Activated naive CD8-positive, alpha-beta T cell treated with anti-CD3 and anti-CD28 coated beads, Interleukin-2, amount 10 ng/mL, durations not matched to agents 7 days and 5 days (primary cell): ENCODE measurements at regions of chr7 and their contacts with region 1.

Region 1: DNA sequence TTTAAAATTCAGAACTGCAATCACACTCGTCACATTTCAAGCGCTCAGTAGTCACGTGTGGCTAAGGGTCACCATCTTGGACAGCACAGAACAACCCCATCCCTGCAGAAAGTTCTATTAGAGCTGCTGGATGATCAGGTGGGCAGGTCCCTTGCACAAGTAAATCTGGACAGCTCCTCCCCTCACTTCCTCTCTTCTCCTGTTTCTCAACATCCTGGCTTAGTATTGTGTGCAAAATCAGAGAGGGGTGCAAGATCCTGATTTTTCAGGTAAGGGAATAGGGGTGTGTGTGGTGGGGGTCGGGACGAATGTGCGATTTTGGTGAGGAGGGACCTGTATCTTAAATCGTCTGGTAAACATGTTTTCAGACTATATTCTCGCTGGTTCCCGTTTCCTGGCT is at the start of gene GIMAP4:
- DNase-seq: no peak
- ATAC-seq: peak; percentile 63
- H3K4me3 Mint-ChIP-seq: peak within 1 kb of the TSS; percentile 94
- H3K27ac Mint-ChIP-seq: peak within 1 kb of the TSS; percentile 96
- H3K4me1 Mint-ChIP-seq: peaks cover 55% of the 10 kb centered on the region
- H3K27me3 Mint-ChIP-seq: no peaks in the 10 kb centered on the region
- total RNA-seq, gene GIMAP4: 285 to 288 TPM

Region 2: DNA sequence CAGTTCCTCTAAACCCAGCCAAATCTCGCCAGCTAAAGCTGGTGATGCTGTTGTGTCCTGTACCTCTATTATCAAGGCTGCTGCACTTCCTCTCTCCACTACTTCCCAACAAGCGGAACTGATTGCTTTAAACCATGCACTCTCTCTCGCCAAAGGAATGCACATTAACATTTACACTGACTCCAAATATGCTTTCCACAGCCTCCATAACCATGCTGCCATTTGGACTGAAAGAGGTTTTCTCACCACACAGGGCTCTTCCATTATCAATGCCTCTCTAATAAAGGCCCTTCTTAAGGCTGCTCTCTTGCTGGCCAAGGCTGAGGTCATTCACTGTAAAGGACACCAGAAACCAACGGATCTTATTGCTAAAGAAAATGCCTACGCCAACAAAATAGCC is 255.5 kb before region 1 on chr7:
- POLR2A ChIA-PET with region 1: no interaction called
- DNase-seq: no peak
- ATAC-seq: no peak
- H3K4me3 Mint-ChIP-seq: no peak overlapping the region
- H3K27ac Mint-ChIP-seq: no peak overlapping the region
- H3K4me1 Mint-ChIP-seq: no peaks in the 10 kb centered on the region
- H3K27me3 Mint-ChIP-seq: no peaks in the 10 kb centered on the region

Region 3: DNA sequence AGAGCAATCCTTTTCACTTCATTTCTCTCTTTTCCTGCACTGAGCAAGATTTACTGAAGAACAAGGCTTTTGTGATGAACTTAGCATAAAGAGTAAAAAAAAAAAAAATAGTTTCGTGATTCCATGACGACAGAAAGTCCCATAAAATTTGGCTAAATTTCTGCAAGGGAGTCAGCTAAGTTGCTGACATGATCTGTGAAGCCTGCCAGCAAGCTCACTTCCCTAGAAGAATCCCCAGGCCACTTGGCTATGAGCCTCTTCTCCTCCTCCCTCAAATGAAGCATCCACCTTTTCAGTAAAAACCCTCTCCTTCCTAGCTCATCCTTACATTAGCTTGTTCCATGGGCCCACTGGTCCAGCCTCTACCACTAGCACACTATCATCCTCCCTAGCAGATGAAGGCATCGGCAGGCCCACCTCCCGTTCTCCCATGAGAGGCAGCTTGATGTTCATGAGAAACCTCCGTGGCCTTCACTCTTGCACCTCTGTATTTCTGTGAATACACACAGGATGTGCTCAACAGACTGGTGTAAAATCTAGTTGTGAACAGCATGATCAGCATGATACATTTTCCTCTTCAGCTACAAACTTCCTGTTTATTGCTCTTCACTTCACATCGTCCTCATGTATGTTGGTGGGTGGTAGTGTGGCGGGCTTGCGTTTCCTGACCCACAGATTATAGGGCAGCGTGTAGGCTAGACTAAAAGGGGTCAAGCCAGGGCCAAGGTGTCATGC is 85.8 kb before region 1 on chr7:
- POLR2A ChIA-PET with region 1: interaction called, 13 read pairs
- DNase-seq: peak; percentile 65
- ATAC-seq: peak; percentile 86
- H3K4me3 Mint-ChIP-seq: peak overlapping the region; percentile 84
- H3K27ac Mint-ChIP-seq: peak overlapping the region; percentile 98
- H3K4me1 Mint-ChIP-seq: peaks cover 71% of the 10 kb centered on the region
- H3K27me3 Mint-ChIP-seq: no peaks in the 10 kb centered on the region

Region 4: DNA sequence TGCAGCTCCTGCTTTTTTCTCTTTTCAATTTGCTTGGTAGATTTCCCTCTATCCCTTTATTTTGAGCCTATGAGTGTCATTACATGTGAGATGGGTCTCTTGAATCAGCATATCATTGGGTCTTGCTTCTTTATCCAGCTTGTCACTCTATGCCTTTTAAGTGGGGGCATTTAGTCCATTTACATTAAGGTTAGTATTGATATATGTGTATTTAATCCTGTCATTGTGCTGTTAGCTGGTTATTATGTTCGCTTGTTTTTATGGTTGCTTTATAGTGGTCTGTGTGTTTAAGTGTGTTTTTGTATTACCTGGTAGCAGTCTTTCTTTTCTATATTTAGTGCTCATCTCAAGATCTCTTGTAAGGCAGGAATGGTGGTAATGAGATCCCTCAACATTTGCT is 35.5 kb before region 1 on chr7:
- POLR2A ChIA-PET with region 1: no interaction called
- DNase-seq: no peak
- ATAC-seq: no peak
- H3K4me3 Mint-ChIP-seq: no peak overlapping the region
- H3K27ac Mint-ChIP-seq: no peak overlapping the region
- H3K4me1 Mint-ChIP-seq: peaks cover 10% of the 10 kb centered on the region
- H3K27me3 Mint-ChIP-seq: no peaks in the 10 kb centered on the region

Region 5: GRCh38 chr7:150586785-150587152 is 19.6 kb after region 1 on chr7:
- POLR2A ChIA-PET with region 1: interaction called, 11 read pairs
- DNase-seq: no peak
- ATAC-seq: peak; percentile 70
- H3K4me3 Mint-ChIP-seq: peak overlapping the region; percentile 22
- H3K27ac Mint-ChIP-seq: peak overlapping the region; percentile 82
- H3K4me1 Mint-ChIP-seq: peaks cover 22% of the 10 kb centered on the region
- H3K27me3 Mint-ChIP-seq: no peaks in the 10 kb centered on the region

Region 6: DNA sequence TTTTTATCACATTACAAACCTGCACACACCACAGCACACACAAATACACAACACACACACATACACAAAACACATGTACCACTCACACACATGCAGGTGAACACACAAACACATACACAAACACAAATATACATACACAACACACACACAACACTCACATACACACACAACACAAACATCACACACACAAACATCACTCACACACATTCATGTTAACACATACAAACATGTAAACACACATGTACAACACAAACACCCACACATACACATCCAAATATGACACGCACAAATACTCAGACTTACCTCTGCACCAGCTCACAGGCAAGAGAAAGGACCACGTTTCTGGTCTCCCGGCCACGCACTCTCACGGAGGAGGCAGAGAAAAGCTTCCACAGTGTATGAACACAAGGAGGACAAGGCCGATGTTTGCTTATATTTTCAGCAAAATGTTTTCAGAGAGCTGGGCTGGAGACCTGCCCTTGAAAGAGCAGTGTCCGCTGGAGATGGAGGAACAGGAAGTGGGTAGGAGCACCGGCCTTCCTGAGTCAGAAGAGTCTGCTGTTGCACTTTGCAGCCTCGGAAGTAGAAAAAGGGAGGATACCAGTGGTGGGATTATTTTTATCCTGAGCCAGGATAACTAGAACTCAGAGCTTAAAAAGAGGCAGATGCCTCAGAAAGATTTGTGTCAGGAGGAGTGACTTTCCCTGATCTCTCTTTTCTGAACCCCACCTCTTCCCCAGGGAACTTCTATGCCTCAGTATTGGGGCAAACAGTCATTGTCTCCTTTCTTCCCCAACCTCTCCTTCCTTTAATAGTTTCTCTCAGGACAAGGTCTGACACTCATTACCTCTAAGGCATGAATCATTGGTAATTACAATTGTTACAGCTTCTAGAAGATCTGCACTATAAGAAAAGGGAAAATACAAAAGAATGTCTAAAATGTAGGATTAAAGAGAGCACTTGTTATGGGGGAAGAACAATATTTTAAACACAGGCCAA is 65.0 kb after region 1 on chr7 and contains the start of gene GIMAP6:
- POLR2A ChIA-PET with region 1: interaction called, 14 read pairs
- DNase-seq: no peak
- ATAC-seq: peak; percentile 63
- H3K4me3 Mint-ChIP-seq: peak within 1 kb of the TSS; percentile 93
- H3K27ac Mint-ChIP-seq: peak within 1 kb of the TSS; percentile 94
- H3K4me1 Mint-ChIP-seq: peaks cover 46% of the 10 kb centered on the region
- H3K27me3 Mint-ChIP-seq: no peaks in the 10 kb centered on the region
- total RNA-seq, gene GIMAP6: 124 to 130 TPM

Region 7: GRCh38 chr7:150648353-150649079 is 81.3 kb after region 1 on chr7:
- POLR2A ChIA-PET with region 1: no interaction called
- DNase-seq: no peak
- ATAC-seq: peak; percentile 56
- H3K4me3 Mint-ChIP-seq: peak overlapping the region; percentile 27
- H3K27ac Mint-ChIP-seq: peak overlapping the region; percentile 73
- H3K4me1 Mint-ChIP-seq: peaks cover 30% of the 10 kb centered on the region
- H3K27me3 Mint-ChIP-seq: no peaks in the 10 kb centered on the region

Region 8: GRCh38 chr7:150685219-150686029 is 118.3 kb after region 1 on chr7 and contains the start of gene GIMAP2:
- POLR2A ChIA-PET with region 1: interaction called, 16 read pairs
- DNase-seq: no peak
- ATAC-seq: peak; percentile 85
- H3K4me3 Mint-ChIP-seq: peak within 1 kb of the TSS; percentile 98
- H3K27ac Mint-ChIP-seq: peak within 1 kb of the TSS; percentile 98
- H3K4me1 Mint-ChIP-seq: peaks cover 64% of the 10 kb centered on the region
- H3K27me3 Mint-ChIP-seq: no peaks in the 10 kb centered on the region
- total RNA-seq, gene GIMAP2: 139 to 140 TPM

Region 9: DNA sequence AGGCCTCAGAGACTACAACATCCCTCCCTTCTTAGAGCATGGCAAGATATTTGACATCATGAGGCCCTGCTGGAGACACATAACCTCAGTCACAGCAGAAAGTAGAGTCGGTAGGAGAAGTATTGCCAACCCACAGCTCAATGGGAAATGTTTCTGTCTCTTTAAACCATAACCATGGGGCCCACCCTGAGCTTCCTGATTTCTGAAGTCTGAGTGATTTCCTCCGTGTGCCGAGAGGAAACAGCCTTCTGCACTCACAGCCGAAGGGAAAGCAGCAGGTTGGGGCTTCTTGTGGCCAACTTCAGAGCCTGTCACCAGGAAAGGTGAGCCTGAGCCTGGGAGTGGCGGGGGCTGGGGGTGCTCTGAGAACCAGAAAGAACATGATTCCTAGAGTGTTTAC is 149.2 kb after region 1 on chr7 and contains the start of gene GIMAP1:
- POLR2A ChIA-PET with region 1: interaction called, 10 read pairs
- DNase-seq: no peak
- ATAC-seq: peak; percentile 76
- H3K4me3 Mint-ChIP-seq: peak within 1 kb of the TSS; percentile 84
- H3K27ac Mint-ChIP-seq: peak within 1 kb of the TSS; percentile 87
- H3K4me1 Mint-ChIP-seq: peaks cover 43% of the 10 kb centered on the region
- H3K27me3 Mint-ChIP-seq: no peaks in the 10 kb centered on the region
- total RNA-seq, gene GIMAP1: 42.1 to 43.0 TPM

Region 10: GRCh38 chr7:150753826-150754603 is 186.8 kb after region 1 on chr7:
- POLR2A ChIA-PET with region 1: interaction called, 15 read pairs
- DNase-seq: no peak
- ATAC-seq: peak; percentile 23
- H3K4me3 Mint-ChIP-seq: peak overlapping the region; percentile 55
- H3K27ac Mint-ChIP-seq: peak overlapping the region; percentile 92
- H3K4me1 Mint-ChIP-seq: peaks cover 55% of the 10 kb centered on the region
- H3K27me3 Mint-ChIP-seq: peaks cover 2% of the 10 kb centered on the region